A549 (cell line): ENCODE measurements at regions of chr1 and their contacts with region 1.

Region 1: GRCh38 chr1:151254217-151255213 is at the start of gene PSMD4:
- DNase-seq: peak; percentile 99
- ATAC-seq: peak; percentile 96 to 99
- H3K4me3 ChIP-seq: peak within 1 kb of the TSS; percentile 77
- H3K27ac ChIP-seq: peak within 1 kb of the TSS; percentile 93 to 95
- H3K4me1 ChIP-seq: peaks cover 6% of the 10 kb centered on the region; the same call in 1 of the 3 replicates
- CTCF ChIP-seq: no peak
- EP300 ChIP-seq: no peak
- POLR2A ChIP-seq: peak; percentile 92
- RAD21 ChIP-seq: no peak
- polyA plus RNA-seq, gene PSMD4: 241 and 265 TPM in 2 replicates

Region 2: DNA sequence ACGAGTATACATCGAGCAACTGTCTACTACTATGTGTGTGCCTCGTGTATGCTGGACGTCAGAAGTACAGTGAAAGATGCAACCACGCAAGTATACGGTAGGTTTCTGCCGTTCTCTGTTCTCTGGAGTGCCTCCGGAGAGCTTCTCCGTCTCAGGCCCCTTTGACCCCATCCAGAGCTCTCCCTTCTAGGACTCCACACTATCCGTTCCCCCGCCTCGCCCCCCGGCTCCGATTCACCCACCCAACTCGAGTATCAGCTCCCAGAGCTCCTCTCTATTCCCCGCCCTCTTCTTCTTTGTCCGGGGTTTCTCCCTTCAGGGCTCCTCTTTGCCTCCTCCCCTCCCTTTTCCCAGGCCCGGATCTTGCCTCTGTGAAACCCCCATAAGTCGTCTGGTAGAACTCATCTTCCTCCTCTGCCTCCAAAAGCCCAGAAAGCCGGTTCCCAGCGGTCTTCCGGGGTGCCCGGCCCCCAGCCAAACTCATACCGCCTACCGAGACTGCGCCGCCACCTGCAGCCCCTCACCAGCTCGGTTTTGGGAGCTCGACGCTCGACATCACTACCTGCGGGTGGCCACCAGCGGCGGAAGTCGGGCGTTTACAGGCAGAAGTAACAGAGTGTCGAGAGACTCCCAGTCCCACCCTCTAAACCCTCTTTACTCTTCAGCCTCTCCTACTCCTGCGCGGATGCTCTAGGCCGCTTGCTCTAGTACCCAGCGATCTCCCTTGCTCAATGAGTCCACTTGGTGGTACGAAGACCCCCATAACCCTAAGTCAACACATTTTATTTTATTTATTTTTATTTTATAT is 64.7 kb before region 1 on chr1 and contains the start of gene VPS72:
- CTCF ChIA-PET with region 1: interaction called, 18 read pairs
- POLR2A ChIA-PET with region 1: interaction called, 5 read pairs
- DNase-seq: peak; percentile 93
- ATAC-seq: peak; percentile 94 to 98
- H3K4me3 ChIP-seq: peak within 1 kb of the TSS; percentile 80
- H3K27ac ChIP-seq: peak within 1 kb of the TSS; percentile 86 to 89
- H3K4me1 ChIP-seq: peaks cover 20% of the 10 kb centered on the region
- CTCF ChIP-seq: no peak
- EP300 ChIP-seq: 0 out of 5 replicates have a peak, but pooled peaks of 1 of the 2 experiments have one; percentile 14
- POLR2A ChIP-seq: peak; percentile 75
- RAD21 ChIP-seq: no peak
- polyA plus RNA-seq, gene VPS72: 64.4 and 81.2 TPM in 2 replicates

Region 3: GRCh38 chr1:151210830-151211229 is 43.7 kb before region 1 on chr1:
- CTCF ChIA-PET with region 1: interaction called, 15 read pairs
- POLR2A ChIA-PET with region 1: interaction called, 4 read pairs
- DNase-seq: no peak
- ATAC-seq: no peak
- H3K4me3 ChIP-seq: no peak overlapping the region
- H3K27ac ChIP-seq: no peak overlapping the region
- H3K4me1 ChIP-seq: peaks cover 4% of the 10 kb centered on the region; the same call in 1 of the 3 replicates
- CTCF ChIP-seq: no peak
- EP300 ChIP-seq: no peak
- POLR2A ChIP-seq: no peak
- RAD21 ChIP-seq: no peak

Region 4: DNA sequence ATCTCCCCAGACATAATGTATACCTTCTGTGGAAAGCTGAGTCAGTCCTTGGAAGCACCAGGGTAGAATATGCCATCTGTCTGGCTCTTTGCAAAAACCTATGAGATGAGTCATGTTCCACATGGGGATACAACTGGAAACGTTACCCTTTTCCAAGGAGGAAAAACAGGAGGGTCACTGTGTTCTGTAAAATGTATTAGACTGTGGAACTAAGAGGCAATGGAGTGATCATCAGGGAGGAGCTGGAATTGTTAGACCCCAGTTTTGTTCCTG is 16.1 kb before region 1 on chr1:
- CTCF ChIA-PET with region 1: interaction called, 27 read pairs
- POLR2A ChIA-PET with region 1: interaction called, 3 read pairs
- DNase-seq: peak in 1 of 2 experiments; percentile 16
- ATAC-seq: peak in 1 of 2 experiments; percentile 67; a peak in 4 of 6 replicates
- H3K4me3 ChIP-seq: no peak overlapping the region
- H3K27ac ChIP-seq: peak overlapping the region in 1 of 2 experiments; percentile 31; a peak in 1 of 6 replicates
- H3K4me1 ChIP-seq: 0 out of 3 replicates have a peak, but pooled peaks cover 8% of the 10 kb centered on the region
- CTCF ChIP-seq: no peak
- EP300 ChIP-seq: no peak
- POLR2A ChIP-seq: no peak
- RAD21 ChIP-seq: no peak

Region 5: GRCh38 chr1:151281969-151282882 is 27.7 kb after region 1 on chr1 and contains the start of gene ZNF687:
- CTCF ChIA-PET with region 1: interaction called, 5 read pairs
- POLR2A ChIA-PET with region 1: interaction called, 18 read pairs
- DNase-seq: peak; percentile 100
- ATAC-seq: peak; percentile 89 to 96
- H3K4me3 ChIP-seq: peak within 1 kb of the TSS; percentile 75
- H3K27ac ChIP-seq: peak within 1 kb of the TSS; percentile 90 to 92
- H3K4me1 ChIP-seq: peaks cover 13% of the 10 kb centered on the region
- CTCF ChIP-seq: no peak
- EP300 ChIP-seq: no peak
- POLR2A ChIP-seq: peak; percentile 64
- RAD21 ChIP-seq: no peak
- polyA plus RNA-seq, gene ZNF687: 14.0 and 14.3 TPM in 2 replicates

Region 6: GRCh38 chr1:151594143-151594625 is 339.7 kb after region 1 on chr1:
- CTCF ChIA-PET with region 1: no interaction called
- POLR2A ChIA-PET with region 1: no interaction called
- DNase-seq: peak; percentile 80
- ATAC-seq: peak; percentile 67 to 75; a peak in 5 of 6 replicates
- H3K4me3 ChIP-seq: no peak overlapping the region
- H3K27ac ChIP-seq: peak overlapping the region; percentile 8 to 15; a peak in 2 of 6 replicates
- H3K4me1 ChIP-seq: peaks cover 27% of the 10 kb centered on the region
- CTCF ChIP-seq: peak; percentile 91
- EP300 ChIP-seq: no peak
- POLR2A ChIP-seq: no peak
- RAD21 ChIP-seq: peak; percentile 86 to 89